Activated CD4-positive, alpha-beta T cell treated with anti-CD3 and anti-CD28 coated beads, Interleukin-2, amount 10 ng/mL, durations not matched to agents 24 days and 14 days (primary cell): ENCODE measurements at regions of chr3 and their contacts with region 1.

Region 1: GRCh38 chr3:188962253-188963247 is 209.2 kb upstream of the TPRG1 start:
- DNase-seq: no peak
- H3K4me3 Mint-ChIP-seq: no peak overlapping the region
- H3K27ac Mint-ChIP-seq: no peak overlapping the region
- H3K4me1 Mint-ChIP-seq: peaks cover 12% of the 10 kb centered on the region
- H3K27me3 Mint-ChIP-seq: peaks cover 40% of the 10 kb centered on the region

Region 2: DNA sequence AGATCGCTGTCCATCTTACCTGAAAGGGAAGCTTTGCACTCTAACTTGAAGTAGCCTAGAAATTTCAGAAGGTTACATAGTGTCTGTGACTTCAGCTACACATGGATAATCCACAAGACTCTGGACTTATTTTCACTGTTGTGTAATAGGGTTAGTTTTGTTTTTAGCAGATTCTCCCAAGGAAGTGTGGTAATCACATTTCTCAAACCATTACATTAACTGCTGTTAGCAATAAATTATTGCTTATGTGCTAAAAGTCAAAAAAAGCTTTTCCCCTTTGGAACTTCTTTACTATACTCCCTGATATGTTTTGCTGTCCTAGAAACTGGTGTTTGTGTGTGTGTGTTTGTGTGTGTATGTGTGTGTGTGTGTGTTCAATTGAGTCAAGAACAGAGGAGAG is 142.6 kb before region 1 on chr3:
- intact Hi-C with region 1: no loop called
- DNase-seq: no peak
- H3K4me3 Mint-ChIP-seq: no peak overlapping the region
- H3K27ac Mint-ChIP-seq: peak overlapping the region; percentile 8
- H3K4me1 Mint-ChIP-seq: peaks cover 2% of the 10 kb centered on the region
- H3K27me3 Mint-ChIP-seq: peaks cover 2% of the 10 kb centered on the region

Region 3: GRCh38 chr3:188929137-188929536 is 33.4 kb before region 1 on chr3:
- intact Hi-C with region 1: no loop called
- DNase-seq: no peak
- H3K4me3 Mint-ChIP-seq: no peak overlapping the region
- H3K27ac Mint-ChIP-seq: no peak overlapping the region
- H3K4me1 Mint-ChIP-seq: peaks cover 5% of the 10 kb centered on the region
- H3K27me3 Mint-ChIP-seq: no peaks in the 10 kb centered on the region

Region 4: DNA sequence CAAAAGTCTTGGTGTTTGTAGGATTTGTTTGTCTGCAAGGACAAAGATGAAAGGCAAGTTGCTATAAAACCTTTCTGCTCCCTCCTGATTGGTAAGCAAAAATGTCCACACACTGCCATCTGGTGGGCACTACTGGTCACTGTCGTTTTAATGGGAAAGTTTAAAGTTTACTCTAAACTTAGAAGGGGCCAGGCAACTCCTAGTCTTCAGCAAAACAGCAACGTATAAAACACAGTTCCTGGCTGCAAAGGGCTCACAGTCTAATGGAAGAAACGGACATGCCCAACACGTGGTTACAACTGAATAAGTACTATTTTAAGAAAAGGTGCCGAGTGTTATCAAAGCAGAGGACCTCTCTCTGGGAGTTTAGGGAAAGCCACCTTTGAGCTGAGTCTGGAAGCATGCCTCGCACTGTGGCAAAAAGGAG is 185.5 kb after region 1 on chr3:
- intact Hi-C with region 1: loop called (anchors 1 kb)
- DNase-seq: peak; percentile 89
- H3K4me3 Mint-ChIP-seq: no peak overlapping the region
- H3K27ac Mint-ChIP-seq: no peak overlapping the region
- H3K4me1 Mint-ChIP-seq: peaks cover 28% of the 10 kb centered on the region
- H3K27me3 Mint-ChIP-seq: peaks cover 10% of the 10 kb centered on the region